Heart right ventricle (tissue), 16 donors: ENCODE measurements at regions of chr3 and their contacts with region 1.

Region 1: DNA sequence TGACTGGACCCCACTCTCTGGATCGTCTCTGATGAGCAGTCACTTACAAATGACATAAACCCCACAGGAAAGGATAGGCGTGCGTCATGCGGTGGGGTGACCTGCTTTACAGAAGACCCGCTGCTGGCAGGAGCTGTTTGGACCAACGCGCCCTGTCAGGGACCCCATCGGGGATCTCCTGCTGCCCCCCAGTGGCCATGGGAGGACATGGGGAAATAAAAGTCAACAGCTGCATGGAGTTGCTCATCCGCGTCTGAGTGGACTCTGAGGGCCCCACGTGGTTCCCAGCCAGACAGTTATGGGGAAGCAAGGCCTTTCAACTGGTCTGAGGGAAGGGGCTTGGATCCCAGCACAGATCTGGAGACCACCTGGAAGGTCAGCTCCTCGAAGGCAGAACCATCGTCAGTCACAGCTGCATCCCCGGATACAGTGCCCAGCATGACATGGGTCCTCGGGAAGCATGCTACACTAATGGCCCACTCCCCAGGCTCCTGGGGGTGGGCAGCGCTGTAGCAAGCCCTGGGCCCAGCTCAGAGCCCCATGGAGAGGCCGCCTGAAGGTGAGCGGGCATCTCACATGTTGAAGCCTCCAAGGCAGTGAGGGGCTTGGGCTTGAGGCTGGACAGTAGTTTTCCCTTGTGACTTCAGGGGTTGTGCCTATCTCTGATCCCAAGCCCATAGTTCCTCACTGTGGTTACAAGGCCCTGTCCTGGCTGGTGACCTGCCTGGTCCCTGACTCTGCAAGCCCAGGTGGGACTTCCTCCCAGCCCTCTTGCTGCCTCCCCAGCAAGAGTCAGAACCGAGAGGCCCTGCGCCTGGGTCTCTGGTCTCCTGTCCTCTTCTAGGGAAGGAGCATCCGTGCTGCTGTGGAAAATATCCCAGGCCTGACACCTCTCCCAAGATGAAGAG is 32.3 kb downstream of the PTH1R start:
- DNase-seq: peak; percentile 84 to 89
- ATAC-seq: peak; percentile 75 to 88 (median 82)
- H3K4me3 ChIP-seq: peak overlapping the region in 1 of 10 donors; percentile 19
- H3K27ac ChIP-seq: no peak overlapping the region
- H3K4me1 ChIP-seq: peaks cover 9 to 36% (median 24%) of the 10 kb centered on the region in 9 donors
- H3K27me3 ChIP-seq: no peaks in the 10 kb centered on the region
- CTCF ChIP-seq: peak; percentile 67 to 93 (median 88)

Region 2: DNA sequence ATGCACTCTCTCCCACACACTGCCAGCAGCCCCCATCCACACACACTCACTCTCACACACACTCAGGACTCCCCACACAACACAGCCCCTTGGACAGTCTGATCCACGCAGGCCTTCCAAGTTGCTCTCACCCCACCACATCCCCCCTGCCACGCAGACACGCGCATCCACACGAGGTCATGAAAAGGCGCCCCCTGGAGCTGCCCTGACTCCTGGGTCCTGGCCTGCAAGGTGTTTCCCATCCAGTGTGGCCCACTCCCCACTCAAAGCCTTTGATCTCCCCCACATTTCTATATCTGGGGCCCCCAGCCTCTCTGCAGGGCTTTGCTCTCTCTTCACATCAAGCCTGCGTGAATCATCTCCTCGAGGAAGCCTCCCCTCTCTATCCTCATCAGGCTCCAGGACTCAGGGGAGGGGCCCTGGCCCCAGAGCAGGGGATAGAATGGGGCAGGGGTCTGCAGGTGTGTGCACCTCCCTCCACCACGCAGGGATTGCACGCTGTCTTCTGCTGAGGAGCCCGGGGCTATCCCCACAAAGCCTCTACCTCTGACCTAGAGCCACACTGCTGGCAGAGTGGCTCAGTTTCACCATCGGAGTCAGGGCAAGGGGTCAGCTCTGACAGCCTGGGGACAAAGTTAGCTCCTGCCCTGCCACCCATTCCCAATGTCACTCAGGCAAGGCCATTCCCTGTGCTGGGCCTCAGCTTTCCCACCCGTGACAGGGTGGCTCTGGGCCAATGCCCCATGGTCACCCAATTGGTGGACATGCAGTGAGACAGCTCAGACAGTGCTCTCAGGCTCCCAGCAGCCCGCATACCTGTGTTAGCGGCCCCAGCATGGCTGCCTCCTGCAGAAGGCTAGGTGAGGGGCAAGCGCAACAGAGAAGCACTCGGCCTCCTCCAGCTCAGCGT is 53.0 kb before region 1 on chr3:
- intact Hi-C with region 1: loop called in 1 of 10 experiments (anchors 5 kb)
- DNase-seq: peak; percentile 5 to 23
- ATAC-seq: no peak
- H3K4me3 ChIP-seq: peak overlapping the region in 6 of 10 donors; percentile 28 to 69 (median 62)
- H3K27ac ChIP-seq: peak overlapping the region in 8 of 10 donors; percentile 9 to 98 (median 78)
- H3K4me1 ChIP-seq: peaks cover 0 to 39% (median 1%) of the 10 kb centered on the region in 9 donors
- H3K27me3 ChIP-seq: no peaks in the 10 kb centered on the region
- CTCF ChIP-seq: no peak

Region 3: GRCh38 chr3:46866720-46867549 is 42.9 kb before region 1 on chr3:
- intact Hi-C with region 1: loop called in 7 of 10 experiments (anchors 5 kb)
- DNase-seq: peak; percentile 90 to 94
- ATAC-seq: peak; percentile 4 to 62 (median 32)
- H3K4me3 ChIP-seq: peak overlapping the region in 1 of 10 donors; percentile 22
- H3K27ac ChIP-seq: peak overlapping the region; percentile 65 to 98 (median 90)
- H3K4me1 ChIP-seq: peaks cover 23 to 75% (median 48%) of the 10 kb centered on the region in 9 donors
- H3K27me3 ChIP-seq: no peaks in the 10 kb centered on the region
- CTCF ChIP-seq: peak; percentile 87 to 94 (median 91)